PC-3 (cell line): ENCODE measurements at regions of chr10 and their contacts with region 1.

Region 1: GRCh38 chr10:35781643-35782035 is 139.5 kb upstream of the FZD8 start:
- DNase-seq: peak; percentile 72
- ATAC-seq: no peak
- H3K4me3 ChIP-seq: no peak overlapping the region
- H3K27ac ChIP-seq: peak overlapping the region; percentile 72; the same call in 1 of the 2 replicates
- H3K4me1 ChIP-seq: peaks cover 37% of the 10 kb centered on the region
- H3K27me3 ChIP-seq: no peaks in the 10 kb centered on the region
- CTCF ChIP-seq: peak; percentile 72

Region 2: GRCh38 chr10:35795131-35795819 is 13.6 kb after region 1 on chr10:
- CTCF ChIA-PET with region 1: interaction called, 3 read pairs
- POLR2A ChIA-PET with region 1: interaction called, 3 read pairs
- intact Hi-C with region 1: loop called (anchors 1 kb)
- DNase-seq: peak; percentile 100
- ATAC-seq: peak; percentile 94
- H3K4me3 ChIP-seq: peak overlapping the region; percentile 12
- H3K27ac ChIP-seq: peak overlapping the region; percentile 80
- H3K4me1 ChIP-seq: peaks cover 46% of the 10 kb centered on the region
- H3K27me3 ChIP-seq: no peaks in the 10 kb centered on the region
- CTCF ChIP-seq: no peak

Region 3: DNA sequence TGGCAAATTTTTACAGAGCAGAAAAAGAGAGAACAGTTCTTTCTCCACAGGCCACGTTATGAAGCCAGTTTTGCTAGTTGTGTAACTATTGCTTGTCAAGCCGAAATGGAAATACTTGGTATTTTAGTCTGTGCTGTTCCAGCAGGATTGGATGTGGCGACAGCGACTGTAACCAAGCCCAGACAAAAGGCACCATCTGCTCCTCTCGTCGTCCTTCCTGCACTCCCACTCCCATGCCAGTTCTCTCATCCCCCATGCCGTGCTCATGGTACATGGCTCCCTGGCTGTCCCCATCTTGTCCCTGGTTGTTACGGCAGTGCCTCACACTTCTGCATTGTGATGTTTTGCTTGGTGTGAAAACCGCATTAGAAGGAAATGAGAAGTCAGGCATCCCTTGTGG is 46.1 kb after region 1 on chr10:
- CTCF ChIA-PET with region 1: no interaction called
- POLR2A ChIA-PET with region 1: no interaction called
- intact Hi-C with region 1: no loop called
- DNase-seq: no peak
- ATAC-seq: no peak
- H3K4me3 ChIP-seq: no peak overlapping the region
- H3K27ac ChIP-seq: no peak overlapping the region
- H3K4me1 ChIP-seq: no peaks in the 10 kb centered on the region
- H3K27me3 ChIP-seq: no peaks in the 10 kb centered on the region
- CTCF ChIP-seq: no peak

Region 4: GRCh38 chr10:35916791-35917190 is 135.2 kb after region 1 on chr10:
- CTCF ChIA-PET with region 1: interaction called, 6 read pairs
- POLR2A ChIA-PET with region 1: no interaction called
- intact Hi-C with region 1: loop called (anchors 1 kb)
- DNase-seq: peak; percentile 64
- ATAC-seq: peak; percentile 21
- H3K4me3 ChIP-seq: no peak overlapping the region
- H3K27ac ChIP-seq: no peak overlapping the region
- H3K4me1 ChIP-seq: peaks cover 22% of the 10 kb centered on the region
- H3K27me3 ChIP-seq: no peaks in the 10 kb centered on the region
- CTCF ChIP-seq: peak; percentile 68

Region 5: DNA sequence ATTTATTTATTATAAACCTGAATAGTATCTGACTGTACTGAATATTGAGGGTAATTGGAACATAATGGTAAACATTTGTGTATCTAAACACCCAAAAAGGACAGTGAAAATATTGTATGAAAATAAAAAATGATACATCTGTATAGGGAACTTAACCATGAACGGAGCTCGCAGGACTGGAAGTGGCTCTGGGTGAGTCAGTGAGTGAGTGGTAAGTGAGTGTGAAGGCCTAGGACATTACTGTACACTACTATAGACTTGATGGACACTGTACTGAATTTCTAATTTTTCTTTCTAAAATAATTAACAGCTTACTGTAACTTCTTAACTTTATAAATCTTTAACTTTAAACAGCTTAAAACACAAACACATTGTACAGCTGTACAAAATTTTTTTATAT is 314.9 kb after region 1 on chr10:
- CTCF ChIA-PET with region 1: no interaction called
- POLR2A ChIA-PET with region 1: no interaction called
- intact Hi-C with region 1: loop called (anchors 1 kb)
- DNase-seq: peak; percentile 97
- ATAC-seq: peak; percentile 71
- H3K4me3 ChIP-seq: no peak overlapping the region
- H3K27ac ChIP-seq: peak overlapping the region; percentile 58
- H3K4me1 ChIP-seq: peaks cover 29% of the 10 kb centered on the region
- H3K27me3 ChIP-seq: no peaks in the 10 kb centered on the region
- CTCF ChIP-seq: no peak

Region 6: DNA sequence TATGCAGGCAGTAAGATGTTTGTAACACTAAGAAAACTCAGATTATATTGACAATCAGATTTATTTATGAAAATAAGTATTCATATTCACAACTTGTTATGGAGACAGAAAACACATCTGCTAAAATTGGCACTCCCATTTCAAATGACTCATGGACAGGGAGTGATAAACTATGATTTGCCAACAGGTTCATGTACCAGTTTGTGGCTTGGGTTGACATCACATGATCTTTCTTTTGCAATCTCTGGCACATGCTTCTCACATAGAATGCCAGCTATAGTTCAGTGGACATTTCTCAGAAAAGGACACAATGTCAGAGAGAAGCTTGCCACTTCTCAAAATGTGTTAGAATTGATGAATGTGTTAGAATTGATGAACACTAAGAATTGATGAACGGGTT is 680.6 kb after region 1 on chr10:
- CTCF ChIA-PET with region 1: interaction called, 3 read pairs
- POLR2A ChIA-PET with region 1: interaction called, 3 read pairs
- intact Hi-C with region 1: loop called (anchors 1 kb)
- DNase-seq: peak; percentile 95
- ATAC-seq: no peak
- H3K4me3 ChIP-seq: no peak overlapping the region
- H3K27ac ChIP-seq: no peak overlapping the region
- H3K4me1 ChIP-seq: peaks cover 40% of the 10 kb centered on the region
- H3K27me3 ChIP-seq: no peaks in the 10 kb centered on the region
- CTCF ChIP-seq: no peak

Region 7: GRCh38 chr10:36634916-36635315 is 853.3 kb after region 1 on chr10:
- CTCF ChIA-PET with region 1: no interaction called
- POLR2A ChIA-PET with region 1: no interaction called
- intact Hi-C with region 1: loop called (anchors 1 kb)
- DNase-seq: peak; percentile 82
- ATAC-seq: peak; percentile 45
- H3K4me3 ChIP-seq: no peak overlapping the region
- H3K27ac ChIP-seq: peak overlapping the region; percentile 52
- H3K4me1 ChIP-seq: peaks cover 36% of the 10 kb centered on the region
- H3K27me3 ChIP-seq: no peaks in the 10 kb centered on the region
- CTCF ChIP-seq: no peak